Naive thymus-derived CD4-positive, alpha-beta T cell (primary cell): ENCODE measurements at regions of chr22 and their contacts with region 1.

Region 1: GRCh38 chr22:26672590-26673468 is 15.4 kb downstream of the MIAT start:
- DNase-seq: peak; percentile 74 to 95 (median 92)
- ATAC-seq: peak; percentile 86
- H3K4me3 ChIP-seq: peak overlapping the region; percentile 90
- H3K4me3 Mint-ChIP-seq: peak overlapping the region; percentile 88 to 98 (median 97)
- H3K27ac ChIP-seq: peak overlapping the region; percentile 93
- H3K27ac Mint-ChIP-seq: peak overlapping the region; percentile 95 to 100 (median 99)
- H3K4me1 ChIP-seq: peaks cover 64 to 71% of the 10 kb centered on the region in 2 donors
- H3K4me1 Mint-ChIP-seq: peaks cover 63 to 90% (median 83%) of the 10 kb centered on the region in 7 donors
- H3K27me3 ChIP-seq: no peaks in the 10 kb centered on the region
- H3K27me3 Mint-ChIP-seq: peaks cover 0 to 5% (median 0%) of the 10 kb centered on the region in 5 donors

Region 2: DNA sequence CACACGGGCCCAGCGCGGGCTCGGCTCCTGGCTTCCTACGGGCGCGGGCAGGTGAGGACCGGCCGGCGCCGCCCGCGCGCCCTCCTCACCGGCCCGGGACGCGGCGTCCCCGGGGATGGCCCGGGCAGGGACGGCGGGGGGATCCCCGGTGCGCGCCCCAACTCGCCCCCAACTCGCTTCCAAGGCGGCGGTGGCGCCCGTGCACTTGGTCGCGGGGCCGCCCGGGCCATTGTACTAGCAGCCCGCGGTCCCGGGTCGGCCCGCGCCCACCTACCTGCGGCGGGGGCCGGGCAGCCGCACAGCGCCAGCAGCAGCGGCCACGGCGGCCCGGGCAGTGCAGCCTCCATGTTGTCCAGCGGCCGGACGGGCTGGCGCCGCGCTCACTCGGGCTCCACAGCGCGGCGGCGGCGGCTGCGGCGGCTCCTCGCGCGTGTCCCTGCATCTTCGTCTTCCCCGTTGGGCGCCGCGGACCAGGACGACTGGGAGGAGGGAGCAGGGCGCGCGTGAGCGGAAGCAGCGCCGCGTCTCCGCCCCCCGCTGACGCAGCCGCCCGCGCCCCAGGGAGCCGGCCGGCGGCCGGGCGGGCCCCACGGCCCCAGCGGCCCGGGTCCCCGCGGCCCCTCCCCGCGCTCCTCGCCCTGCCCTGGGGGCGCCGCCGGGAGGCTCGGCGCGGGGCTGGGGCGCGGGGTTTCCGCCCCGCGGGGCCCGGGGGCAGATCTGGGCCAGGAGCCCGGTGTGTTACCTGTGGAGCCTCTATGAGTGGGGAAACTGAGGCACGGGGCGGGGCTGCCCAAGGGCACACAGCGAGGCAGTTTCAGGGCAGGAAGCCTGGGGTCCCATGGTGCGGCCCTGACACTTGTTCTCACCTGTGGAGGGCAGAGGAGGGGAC is 1267.7 kb before region 1 on chr22:
- CTCF ChIA-PET with region 1: no interaction called
- POLR2A ChIA-PET with region 1: no interaction called
- intact Hi-C with region 1: loop called in 1 of 2 experiments (anchors 10 kb)
- DNase-seq: peak; percentile 44 to 82 (median 56)
- ATAC-seq: peak; percentile 83
- H3K4me3 ChIP-seq: peak overlapping the region; percentile 54
- H3K4me3 Mint-ChIP-seq: peak overlapping the region; percentile 66 to 92 (median 80)
- H3K27ac ChIP-seq: peak overlapping the region; percentile 83
- H3K27ac Mint-ChIP-seq: peak overlapping the region; percentile 51 to 87 (median 77)
- H3K4me1 ChIP-seq: peaks cover 6 to 17% of the 10 kb centered on the region in 2 donors
- H3K4me1 Mint-ChIP-seq: peaks cover 24 to 40% (median 37%) of the 10 kb centered on the region in 7 donors
- H3K27me3 ChIP-seq: no peaks in the 10 kb centered on the region
- H3K27me3 Mint-ChIP-seq: no peaks in the 10 kb centered on the region

Region 3: DNA sequence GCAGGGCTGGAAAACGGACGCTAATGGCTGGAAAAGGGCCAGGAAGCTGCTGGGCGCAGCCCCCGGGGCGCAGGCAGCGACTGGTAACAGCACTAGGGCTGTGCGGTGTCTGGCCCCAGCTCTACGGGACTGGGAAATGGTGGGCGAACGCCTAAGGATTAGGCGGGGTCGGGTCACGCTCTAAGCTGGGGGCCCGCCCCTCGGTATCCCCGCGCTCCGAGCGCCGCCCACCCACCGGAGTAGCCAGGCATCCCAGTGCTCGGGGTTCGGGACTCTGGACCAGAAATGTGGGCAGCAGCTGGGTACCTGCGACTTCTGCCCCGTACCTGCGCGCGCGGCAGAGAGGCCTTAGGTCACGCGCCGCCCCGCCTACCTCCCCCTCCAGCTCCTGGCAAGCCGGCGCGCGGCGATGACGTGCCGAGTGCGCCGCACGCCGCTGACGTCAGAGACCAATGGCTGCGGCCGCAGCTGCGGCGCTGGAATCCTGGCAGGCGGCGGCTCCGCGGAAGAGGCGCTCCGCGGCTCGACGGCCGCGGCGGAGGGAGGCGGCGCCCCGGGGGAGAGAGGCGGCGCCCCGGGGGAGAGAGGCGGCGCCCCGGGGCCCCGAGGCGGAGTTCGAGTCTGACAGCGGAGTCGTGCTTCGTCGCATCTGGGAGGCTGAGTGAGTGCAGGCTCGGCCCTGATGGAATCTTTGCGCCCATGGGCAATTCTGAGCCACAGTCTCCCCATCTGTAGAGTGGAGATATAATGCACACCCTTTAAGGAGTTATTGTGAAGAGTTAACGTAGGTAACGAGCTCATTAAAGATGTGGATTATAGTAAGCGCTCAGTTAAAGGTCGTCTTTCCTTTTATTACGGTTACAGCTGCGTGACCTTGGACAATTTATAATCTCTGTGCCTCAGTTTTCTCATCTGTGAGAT is 189.1 kb before region 1 on chr22 and contains the starts of genes HPS4 and SRRD:
- CTCF ChIA-PET with region 1: interaction called, 5 read pairs
- POLR2A ChIA-PET with region 1: interaction called, 54 read pairs
- intact Hi-C with region 1: loop called (anchors 1 kb)
- DNase-seq: peak; percentile 90 to 99 (median 94)
- ATAC-seq: peak; percentile 93
- H3K4me3 ChIP-seq: peak within 1 kb of the TSS; percentile 61
- H3K4me3 Mint-ChIP-seq: peak within 1 kb of the TSS; percentile 75 to 97 (median 93)
- H3K27ac ChIP-seq: peak within 1 kb of the TSS; percentile 95
- H3K27ac Mint-ChIP-seq: peak within 1 kb of the TSS; percentile 93 to 99 (median 98)
- H3K4me1 ChIP-seq: peaks cover 17 to 48% of the 10 kb centered on the region in 2 donors
- H3K4me1 Mint-ChIP-seq: peaks cover 47 to 77% (median 68%) of the 10 kb centered on the region in 7 donors
- H3K27me3 ChIP-seq: no peaks in the 10 kb centered on the region
- H3K27me3 Mint-ChIP-seq: no peaks in the 10 kb centered on the region
- total RNA-seq, gene HPS4: 45.5 to 64.3 (median 59.1) TPM
- total RNA-seq, gene SRRD: 18.9 to 22.8 (median 20.1) TPM

Region 4: GRCh38 chr22:26589845-26590736 is 82.7 kb before region 1 on chr22 and contains the start of gene TPST2:
- CTCF ChIA-PET with region 1: interaction called, 3 read pairs
- POLR2A ChIA-PET with region 1: interaction called, 3 read pairs
- intact Hi-C with region 1: loop called (anchors 1 kb)
- DNase-seq: peak; percentile 70 to 90 (median 76)
- ATAC-seq: peak; percentile 95
- H3K4me3 ChIP-seq: peak within 1 kb of the TSS; percentile 92
- H3K4me3 Mint-ChIP-seq: peak within 1 kb of the TSS; percentile 90 to 97 (median 94)
- H3K27ac ChIP-seq: peak within 1 kb of the TSS; percentile 79
- H3K27ac Mint-ChIP-seq: peak within 1 kb of the TSS; percentile 85 to 93 (median 91)
- H3K4me1 ChIP-seq: peaks cover 40 to 53% of the 10 kb centered on the region in 2 donors
- H3K4me1 Mint-ChIP-seq: peaks cover 32 to 79% (median 73%) of the 10 kb centered on the region in 7 donors
- H3K27me3 ChIP-seq: no peaks in the 10 kb centered on the region
- H3K27me3 Mint-ChIP-seq: no peaks in the 10 kb centered on the region
- total RNA-seq, gene TPST2: 16.7 to 44.8 (median 20.6) TPM

Region 5: GRCh38 chr22:27804470-27805297 is 1131.9 kb after region 1 on chr22:
- CTCF ChIA-PET with region 1: no interaction called
- POLR2A ChIA-PET with region 1: no interaction called
- intact Hi-C with region 1: loop called in 1 of 2 experiments (anchors 1 kb)
- DNase-seq: peak in 8 of 9 donors; percentile 19 to 56 (median 48)
- ATAC-seq: peak; percentile 53
- H3K4me3 ChIP-seq: no peak overlapping the region
- H3K4me3 Mint-ChIP-seq: peak overlapping the region in 9 of 10 donors; percentile 9 to 86 (median 59)
- H3K27ac ChIP-seq: no peak overlapping the region
- H3K27ac Mint-ChIP-seq: no peak overlapping the region
- H3K4me1 ChIP-seq: peaks cover 8 to 18% of the 10 kb centered on the region in 2 donors
- H3K4me1 Mint-ChIP-seq: peaks cover 13 to 31% (median 15%) of the 10 kb centered on the region in 7 donors
- H3K27me3 ChIP-seq: no peaks in the 10 kb centered on the region
- H3K27me3 Mint-ChIP-seq: peaks cover 11 to 45% (median 33%) of the 10 kb centered on the region in 5 donors